CD4-positive, alpha-beta memory T cell (primary cell): ENCODE measurements at regions of chr10 and their contacts with region 1.

Region 1: GRCh38 chr10:122407375-122408125 is 33.0 kb downstream of the PLEKHA1 start:
- DNase-seq: peak; percentile 25 to 79 (median 46)
- H3K4me3 ChIP-seq: no peak overlapping the region
- H3K4me3 Mint-ChIP-seq: peak overlapping the region; percentile 43 to 74 (median 60)
- H3K27ac ChIP-seq: no peak overlapping the region
- H3K27ac Mint-ChIP-seq: peak overlapping the region; percentile 84 to 96 (median 86)
- H3K4me1 ChIP-seq: peaks cover 52% of the 10 kb centered on the region
- H3K4me1 Mint-ChIP-seq: peaks cover 25 to 50% (median 40%) of the 10 kb centered on the region in 4 donors
- H3K27me3 ChIP-seq: no peaks in the 10 kb centered on the region
- H3K27me3 Mint-ChIP-seq: no peaks in the 10 kb centered on the region

Region 2: DNA sequence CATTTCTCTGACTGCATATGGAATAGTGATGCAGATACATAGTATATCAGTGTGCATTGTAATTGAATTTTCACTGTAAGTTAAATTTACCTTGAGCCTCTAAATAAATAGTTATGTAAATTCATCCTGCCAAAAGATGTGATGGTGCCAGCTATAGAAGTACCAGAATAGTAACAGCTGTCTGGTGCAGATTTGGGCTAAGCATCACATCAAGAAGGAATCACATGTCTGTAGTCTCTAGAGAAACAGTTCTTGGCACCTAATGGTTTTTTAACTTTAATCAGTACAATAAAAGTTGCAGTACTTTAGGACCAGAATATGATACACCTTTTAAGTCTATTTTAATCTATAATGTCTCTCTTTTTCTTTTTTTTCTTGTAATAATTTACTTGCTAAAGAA is 15.7 kb before region 1 on chr10:
- CTCF ChIA-PET with region 1: interaction called, 3 read pairs
- POLR2A ChIA-PET with region 1: interaction called, 10 read pairs
- intact Hi-C with region 1: no loop called
- DNase-seq: no peak
- H3K4me3 ChIP-seq: no peak overlapping the region
- H3K4me3 Mint-ChIP-seq: no peak overlapping the region
- H3K27ac ChIP-seq: no peak overlapping the region
- H3K27ac Mint-ChIP-seq: no peak overlapping the region
- H3K4me1 ChIP-seq: peaks cover 14% of the 10 kb centered on the region
- H3K4me1 Mint-ChIP-seq: peaks cover 24 to 52% (median 39%) of the 10 kb centered on the region in 4 donors
- H3K27me3 ChIP-seq: no peaks in the 10 kb centered on the region
- H3K27me3 Mint-ChIP-seq: no peaks in the 10 kb centered on the region

Region 3: GRCh38 chr10:122419876-122420623 is 12.5 kb after region 1 on chr10:
- CTCF ChIA-PET with region 1: interaction called, 5 read pairs
- POLR2A ChIA-PET with region 1: interaction called, 12 read pairs
- intact Hi-C with region 1: loop called (anchors 1 kb)
- DNase-seq: no peak
- H3K4me3 ChIP-seq: no peak overlapping the region
- H3K4me3 Mint-ChIP-seq: peak overlapping the region in 4 of 8 donors; percentile 38 to 71 (median 48)
- H3K27ac ChIP-seq: no peak overlapping the region
- H3K27ac Mint-ChIP-seq: peak overlapping the region in 6 of 7 donors; percentile 48 to 95 (median 88)
- H3K4me1 ChIP-seq: peaks cover 84% of the 10 kb centered on the region
- H3K4me1 Mint-ChIP-seq: peaks cover 58 to 90% (median 72%) of the 10 kb centered on the region in 4 donors
- H3K27me3 ChIP-seq: no peaks in the 10 kb centered on the region
- H3K27me3 Mint-ChIP-seq: no peaks in the 10 kb centered on the region